ENCODE measurements at regions of chr9 and their contacts with region 1.

Region 1: DNA sequence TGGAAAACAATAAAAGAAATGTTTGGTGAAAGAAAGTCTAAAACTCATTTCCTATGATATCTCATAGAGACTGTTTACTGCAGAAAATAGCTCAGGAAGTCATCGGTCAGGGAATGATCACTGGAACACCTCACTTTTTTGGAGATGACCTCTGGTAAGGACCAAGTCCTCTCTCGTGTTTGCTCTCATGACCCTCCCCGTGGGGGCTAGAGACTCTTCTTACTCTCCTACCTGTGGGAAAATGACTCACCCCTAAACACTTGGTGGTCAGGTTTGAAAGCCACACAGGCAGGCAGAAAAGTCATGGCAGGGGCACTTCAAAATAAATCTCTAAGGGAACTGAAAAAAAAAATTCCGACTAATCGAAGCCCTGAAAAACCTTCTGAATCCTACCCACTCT is 48.2 kb downstream of the FAM240B start:
- DNase-seq: no peak
- ATAC-seq: no peak
- H3K4me3 ChIP-seq: peak overlapping the region; percentile 28; the same call in 2 of the 3 replicates
- H3K27ac ChIP-seq: peak overlapping the region; percentile 73 to 75
- H3K4me1 ChIP-seq: peaks cover 18% of the 10 kb centered on the region
- CTCF ChIP-seq: no peak
- EP300 ChIP-seq: no peak
- POLR2A ChIP-seq: no peak
- RAD21 ChIP-seq: no peak

Region 2: GRCh38 chr9:38687387-38687842 is 15.7 kb after region 1 on chr9:
- CTCF ChIA-PET with region 1: interaction called, 10 read pairs
- POLR2A ChIA-PET with region 1: interaction called, 4 read pairs
- DNase-seq: peak; percentile 58 to 71
- ATAC-seq: peak; percentile 76 to 84
- H3K4me3 ChIP-seq: peak overlapping the region; percentile 27
- H3K27ac ChIP-seq: peak overlapping the region; percentile 79 to 88
- H3K4me1 ChIP-seq: peaks cover 55% of the 10 kb centered on the region
- CTCF ChIP-seq: no peak
- EP300 ChIP-seq: no peak
- POLR2A ChIP-seq: 0 out of 2 replicates have a peak, but pooled peaks have one; percentile 21
- RAD21 ChIP-seq: no peak

Measured in A549 (cell line).